ENCODE measurements at regions of chr5 and their contacts with region 1.

Region 1: DNA sequence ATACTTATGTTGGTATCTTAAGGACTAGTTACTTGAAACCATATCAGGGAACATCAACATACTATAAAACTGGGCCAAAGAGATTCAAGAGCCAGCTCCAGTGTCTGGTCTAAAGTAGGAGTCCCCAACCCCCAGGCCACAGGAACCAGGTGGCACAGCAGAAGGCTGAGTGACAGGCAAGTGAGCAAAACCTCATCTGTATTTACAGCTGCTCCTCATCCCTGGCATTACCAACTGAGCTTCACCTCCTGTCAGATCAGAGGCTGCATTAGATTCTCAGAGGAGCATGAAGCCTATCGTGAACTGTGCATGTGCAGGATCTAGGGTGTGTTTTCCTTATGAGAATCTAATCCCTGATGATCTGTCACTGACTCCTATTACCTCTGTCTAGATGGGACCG is 581.6 kb upstream of the CDH9 start:
- DNase-seq: no peak
- H3K4me3 ChIP-seq: no peak overlapping the region
- CTCF ChIP-seq: no peak

Region 2: GRCh38 chr5:27532305-27532704 is 87.7 kb before region 1 on chr5:
- in situ Hi-C with region 1: loop called (anchors 5 kb)
- DNase-seq: no peak
- H3K4me3 ChIP-seq: no peak overlapping the region
- CTCF ChIP-seq: no peak